Naive thymus-derived CD4-positive, alpha-beta T cell (primary cell): ENCODE measurements at regions of chr6 and their contacts with region 1.

Region 1: DNA sequence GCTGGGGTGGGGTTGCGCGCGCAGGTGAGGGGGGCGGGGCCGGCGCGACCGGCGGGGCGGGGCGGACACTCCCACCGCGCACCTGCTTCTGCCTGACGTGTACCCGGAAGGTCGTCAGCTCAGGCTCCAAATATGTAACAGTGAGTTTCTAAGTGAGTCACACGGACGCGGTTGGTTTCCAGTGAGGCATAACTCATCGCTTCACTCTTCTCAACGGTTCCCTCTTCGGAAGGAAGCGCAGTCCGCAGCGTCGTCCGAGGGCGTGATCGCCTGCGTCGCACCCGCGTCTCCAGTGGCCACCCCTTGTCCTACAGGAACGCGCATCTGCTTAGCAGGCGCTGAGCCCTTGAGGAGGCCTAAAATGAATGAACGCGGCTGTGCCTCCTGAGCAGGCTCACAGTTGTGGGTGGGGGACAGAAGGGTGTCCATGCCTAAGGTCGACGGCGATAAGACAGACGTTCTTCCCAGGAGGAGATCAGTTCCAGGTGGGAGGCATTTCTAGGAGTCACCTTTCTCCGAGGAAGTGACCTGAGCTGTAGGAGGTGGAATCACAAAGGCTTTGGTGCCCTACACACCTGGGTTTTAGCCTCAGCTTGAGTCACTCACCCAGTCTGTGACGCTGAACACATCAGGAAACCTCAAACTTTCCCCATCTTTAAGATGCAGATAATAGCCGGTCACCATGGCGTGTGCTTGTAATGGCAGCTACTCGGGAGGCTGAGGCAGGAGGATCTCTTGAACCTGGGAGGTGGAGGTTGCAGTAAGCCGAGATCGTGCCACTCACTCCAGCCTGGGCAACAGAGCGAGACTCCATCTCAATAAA is 50.9 kb upstream of the EZR start:
- DNase-seq: peak in 1 of 9 donors; percentile 97
- ATAC-seq: peak; percentile 87
- H3K4me3 ChIP-seq: peak overlapping the region; percentile 71
- H3K4me3 Mint-ChIP-seq: peak overlapping the region; percentile 83 to 96 (median 92)
- H3K27ac ChIP-seq: peak overlapping the region; percentile 98
- H3K27ac Mint-ChIP-seq: peak overlapping the region; percentile 98 to 100 (median 100)
- H3K4me1 ChIP-seq: peaks cover 16 to 18% of the 10 kb centered on the region in 2 donors
- H3K4me1 Mint-ChIP-seq: peaks cover 7 to 45% (median 25%) of the 10 kb centered on the region in 7 donors
- H3K27me3 ChIP-seq: no peaks in the 10 kb centered on the region
- H3K27me3 Mint-ChIP-seq: peaks cover 0 to 5% (median 0%) of the 10 kb centered on the region in 5 donors

Region 2: GRCh38 chr6:158769771-158770432 is 100.1 kb before region 1 on chr6:
- CTCF ChIA-PET with region 1: no interaction called
- POLR2A ChIA-PET with region 1: interaction called, 10 read pairs
- intact Hi-C with region 1: no loop called
- DNase-seq: no peak
- ATAC-seq: no peak
- H3K4me3 ChIP-seq: no peak overlapping the region
- H3K4me3 Mint-ChIP-seq: peak overlapping the region in 3 of 10 donors; percentile 12 to 70 (median 18)
- H3K27ac ChIP-seq: peak overlapping the region; percentile 51
- H3K27ac Mint-ChIP-seq: peak overlapping the region; percentile 25 to 93 (median 87)
- H3K4me1 ChIP-seq: peaks cover 19 to 37% of the 10 kb centered on the region in 2 donors
- H3K4me1 Mint-ChIP-seq: peaks cover 29 to 53% (median 43%) of the 10 kb centered on the region in 7 donors
- H3K27me3 ChIP-seq: no peaks in the 10 kb centered on the region
- H3K27me3 Mint-ChIP-seq: no peaks in the 10 kb centered on the region

Region 3: GRCh38 chr6:158808941-158809678 is 60.9 kb before region 1 on chr6:
- CTCF ChIA-PET with region 1: no interaction called
- POLR2A ChIA-PET with region 1: interaction called, 33 read pairs
- intact Hi-C with region 1: no loop called
- DNase-seq: peak in 2 of 9 donors; percentile 35
- ATAC-seq: peak; percentile 31
- H3K4me3 ChIP-seq: no peak overlapping the region
- H3K4me3 Mint-ChIP-seq: peak overlapping the region in 9 of 10 donors; percentile 9 to 53 (median 35)
- H3K27ac ChIP-seq: no peak overlapping the region
- H3K27ac Mint-ChIP-seq: peak overlapping the region in 6 of 9 donors; percentile 50 to 79 (median 72)
- H3K4me1 ChIP-seq: peaks cover 78 to 94% of the 10 kb centered on the region in 2 donors
- H3K4me1 Mint-ChIP-seq: peaks cover 63 to 100% (median 97%) of the 10 kb centered on the region in 7 donors
- H3K27me3 ChIP-seq: no peaks in the 10 kb centered on the region
- H3K27me3 Mint-ChIP-seq: no peaks in the 10 kb centered on the region

Region 4: GRCh38 chr6:158843751-158844683 is 26.0 kb before region 1 on chr6:
- CTCF ChIA-PET with region 1: no interaction called
- POLR2A ChIA-PET with region 1: interaction called, 14 read pairs
- intact Hi-C with region 1: no loop called
- DNase-seq: no peak
- ATAC-seq: peak; percentile 45
- H3K4me3 ChIP-seq: no peak overlapping the region
- H3K4me3 Mint-ChIP-seq: no peak overlapping the region
- H3K27ac ChIP-seq: no peak overlapping the region
- H3K27ac Mint-ChIP-seq: peak overlapping the region in 1 of 9 donors; percentile 63
- H3K4me1 ChIP-seq: no peaks in the 10 kb centered on the region
- H3K4me1 Mint-ChIP-seq: peaks cover 0 to 9% (median 1%) of the 10 kb centered on the region in 7 donors
- H3K27me3 ChIP-seq: no peaks in the 10 kb centered on the region
- H3K27me3 Mint-ChIP-seq: peaks cover 0 to 24% (median 0%) of the 10 kb centered on the region in 5 donors

Region 5: GRCh38 chr6:158972241-158973233 is 102.5 kb after region 1 on chr6:
- CTCF ChIA-PET with region 1: no interaction called
- POLR2A ChIA-PET with region 1: interaction called, 5 read pairs
- intact Hi-C with region 1: loop called (anchors 1 to 10 kb)
- DNase-seq: peak in 6 of 9 donors; percentile 41 to 68 (median 60)
- ATAC-seq: peak; percentile 75
- H3K4me3 ChIP-seq: no peak overlapping the region
- H3K4me3 Mint-ChIP-seq: no peak overlapping the region
- H3K27ac ChIP-seq: no peak overlapping the region
- H3K27ac Mint-ChIP-seq: no peak overlapping the region
- H3K4me1 ChIP-seq: no peaks in the 10 kb centered on the region
- H3K4me1 Mint-ChIP-seq: peaks cover 0 to 6% (median 0%) of the 10 kb centered on the region in 7 donors
- H3K27me3 ChIP-seq: no peaks in the 10 kb centered on the region
- H3K27me3 Mint-ChIP-seq: peaks cover 0 to 6% (median 0%) of the 10 kb centered on the region in 5 donors